SK-N-SH (cell line): ENCODE measurements at regions of chr11 and their contacts with region 1.

Region 1: GRCh38 chr11:73280651-73281071 is 8.5 kb downstream of the P2RY6 start:
- DNase-seq: no peak
- H3K4me3 ChIP-seq: no peak overlapping the region
- H3K27ac ChIP-seq: no peak overlapping the region
- H3K4me1 ChIP-seq: peaks cover 0 to 20% of the 10 kb centered on the region in 2 experiments; a peak in 1 of 4 replicates
- H3K27me3 ChIP-seq: no peaks in the 10 kb centered on the region
- CTCF ChIP-seq: no peak
- EP300 ChIP-seq: no peak
- RAD21 ChIP-seq: no peak

Region 2: GRCh38 chr11:73295231-73295995 is 14.8 kb after region 1 on chr11:
- CTCF ChIA-PET with region 1: interaction called, 179 read pairs
- POLR2A ChIA-PET with region 1: no interaction called
- DNase-seq: peak; percentile 77
- H3K4me3 ChIP-seq: peak overlapping the region in 1 of 2 experiments; percentile 35; a peak in 1 of 4 replicates
- H3K27ac ChIP-seq: peak overlapping the region in 1 of 2 experiments; percentile 25; a peak in 2 of 4 replicates
- H3K4me1 ChIP-seq: peaks cover 0 to 4% of the 10 kb centered on the region in 2 experiments; a peak in 1 of 4 replicates
- H3K27me3 ChIP-seq: no peaks in the 10 kb centered on the region
- CTCF ChIP-seq: peak; percentile 97
- EP300 ChIP-seq: no peak
- RAD21 ChIP-seq: peak; percentile 64